Breast epithelium (tissue), 4 donors: ENCODE measurements at regions of chr4 and their contacts with region 1.

Region 1: DNA sequence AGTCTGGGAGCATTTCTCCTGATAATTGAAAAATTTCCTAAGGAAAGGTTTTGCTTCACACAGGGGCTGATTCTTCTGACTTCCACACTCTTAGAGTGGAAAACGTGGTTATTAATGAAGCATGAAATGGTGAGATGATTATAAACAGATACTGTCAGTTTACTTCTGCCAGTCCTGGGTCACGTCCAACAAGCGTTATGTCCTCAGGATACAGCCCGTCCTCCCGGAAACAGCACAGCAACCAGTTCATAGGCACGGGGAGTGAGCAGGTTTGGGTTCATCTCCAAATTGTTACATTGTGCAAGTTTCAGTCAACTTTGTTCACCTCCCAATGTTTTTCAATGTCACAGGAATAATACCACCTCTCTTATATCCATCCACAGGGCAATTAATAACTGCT is 98.8 kb downstream of the NPNT start:
- DNase-seq: peak; percentile 40 to 73
- H3K4me3 ChIP-seq: no peak overlapping the region
- H3K27ac ChIP-seq: peak overlapping the region; percentile 38 to 57
- H3K4me1 ChIP-seq: peaks cover 0 to 7% of the 10 kb centered on the region in 2 donors
- H3K27me3 ChIP-seq: no peaks in the 10 kb centered on the region
- CTCF ChIP-seq: no peak
- POLR2A ChIP-seq: no peak

Region 2: DNA sequence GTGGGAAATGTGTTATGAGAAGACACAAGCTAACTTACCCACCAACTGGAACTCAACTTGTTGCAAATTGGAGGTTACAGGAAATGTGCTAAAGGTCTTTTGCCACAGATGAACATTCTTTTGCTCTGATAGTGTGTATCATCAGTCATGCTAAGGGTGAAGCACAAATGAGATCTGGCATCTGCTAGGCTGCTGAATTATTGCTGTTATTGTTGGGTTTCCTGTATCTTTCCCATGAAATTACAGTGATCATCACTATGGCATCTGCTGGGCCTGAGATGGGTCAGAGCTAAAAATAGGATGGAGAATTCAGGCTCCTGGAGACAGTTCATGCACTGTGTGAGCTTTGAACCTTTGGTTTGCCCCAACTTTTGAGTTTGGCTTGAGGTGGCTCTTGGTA is 25.7 kb after region 1 on chr4:
- intact Hi-C with region 1: loop called (anchors 1 kb)
- DNase-seq: no peak
- H3K4me3 ChIP-seq: no peak overlapping the region
- H3K27ac ChIP-seq: no peak overlapping the region
- H3K4me1 ChIP-seq: no peaks in the 10 kb centered on the region
- H3K27me3 ChIP-seq: no peaks in the 10 kb centered on the region
- CTCF ChIP-seq: no peak
- POLR2A ChIP-seq: no peak